RWPE1 (cell line): ENCODE measurements at regions of chr20 and their contacts with region 1.

Region 1: DNA sequence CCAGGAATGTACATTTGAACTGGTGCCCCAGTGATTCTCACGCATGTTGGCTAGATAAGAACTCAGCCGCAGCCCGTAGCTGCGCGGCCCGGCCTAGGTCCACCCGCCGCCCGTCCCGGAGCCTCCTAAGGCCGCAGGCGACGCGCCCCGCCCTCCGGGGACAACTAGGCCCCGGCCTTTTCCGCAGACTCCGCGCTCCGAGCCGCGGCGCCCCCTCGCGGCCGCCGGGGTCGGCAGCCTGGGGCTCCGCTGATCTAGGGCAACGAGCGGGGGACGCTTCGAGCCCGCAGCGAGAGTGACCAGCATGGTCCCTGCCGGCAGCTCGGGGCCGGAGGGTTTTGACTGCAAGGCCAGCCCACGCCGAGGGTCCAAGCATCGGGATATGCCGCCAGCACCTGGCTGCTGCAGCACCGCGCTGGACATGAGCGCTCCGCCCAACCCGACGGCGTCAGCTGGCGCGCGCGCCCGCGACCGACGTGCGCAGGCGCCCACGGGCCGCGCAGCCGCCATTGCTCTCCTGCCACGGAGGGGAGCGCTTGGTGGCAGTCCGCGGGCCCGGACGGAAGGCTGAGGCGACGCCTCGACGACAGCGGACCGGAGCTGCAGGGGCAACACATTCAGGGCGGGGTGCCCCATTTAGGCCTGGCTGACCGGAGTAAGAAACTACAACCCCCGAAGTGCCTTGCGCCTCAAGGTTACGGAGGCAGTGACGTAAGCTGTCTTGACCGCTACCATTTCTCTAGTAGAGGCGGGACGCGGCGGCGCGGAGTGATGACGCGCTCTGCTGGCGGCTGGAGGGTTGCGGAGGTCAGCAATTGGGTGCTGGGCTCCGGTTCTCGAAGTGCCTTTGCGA is at the start of gene AP5S1:
- DNase-seq: peak; percentile 91
- H3K27ac ChIP-seq: peak within 1 kb of the TSS; percentile 96
- CTCF ChIP-seq: peak; percentile 99

Region 2: GRCh38 chr20:3786665-3787323 is 33.5 kb before region 1 on chr20 and contains the start of gene CENPB:
- CTCF ChIA-PET with region 1: interaction called, 32 read pairs
- POLR2A ChIA-PET with region 1: interaction called, 4 read pairs
- DNase-seq: peak; percentile 92
- H3K27ac ChIP-seq: peak within 1 kb of the TSS; percentile 83
- CTCF ChIP-seq: peak; percentile 99

Region 3: GRCh38 chr20:3795511-3796468 is 24.5 kb before region 1 on chr20 and contains the start of gene CDC25B:
- CTCF ChIA-PET with region 1: interaction called, 17 read pairs
- POLR2A ChIA-PET with region 1: interaction called, 4 read pairs
- DNase-seq: peak; percentile 93
- H3K27ac ChIP-seq: peak within 1 kb of the TSS; percentile 100
- CTCF ChIP-seq: no peak

Region 4: DNA sequence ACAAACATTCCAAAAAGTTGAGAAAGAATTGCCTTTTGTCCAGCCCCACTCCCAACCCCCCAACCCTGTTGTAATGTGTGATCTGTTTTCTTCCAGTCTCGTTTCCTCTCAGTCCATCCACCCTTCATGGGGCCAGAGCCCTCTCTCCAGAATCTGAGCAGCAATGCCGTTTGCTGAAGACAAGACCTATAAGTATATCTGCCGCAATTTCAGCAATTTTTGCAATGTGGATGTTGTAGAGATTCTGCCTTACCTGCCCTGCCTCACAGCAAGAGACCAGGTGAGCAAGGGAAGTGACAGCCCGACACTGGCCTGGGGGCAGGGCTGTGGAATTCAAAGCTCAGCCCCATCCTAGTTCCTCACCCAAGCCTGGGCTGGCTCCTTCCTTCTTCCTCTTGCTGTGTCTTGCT is 34.2 kb after region 1 on chr20:
- CTCF ChIA-PET with region 1: interaction called, 11 read pairs
- POLR2A ChIA-PET with region 1: interaction called, 8 read pairs
- DNase-seq: no peak
- H3K27ac ChIP-seq: peak overlapping the region; percentile 61
- CTCF ChIP-seq: no peak